ENCODE measurements at regions of chr20 and their contacts with region 1.

Region 1: GRCh38 chr20:63537525-63538203 is 488 bp upstream of the PTK6 start:
- DNase-seq: peak; percentile 83 to 97 (median 88)
- ATAC-seq: peak; percentile 86
- H3K4me3 ChIP-seq: peak overlapping the region; percentile 59
- H3K4me3 Mint-ChIP-seq: peak overlapping the region; percentile 80
- H3K27ac ChIP-seq: peak overlapping the region; percentile 59 to 73
- H3K27ac Mint-ChIP-seq: peak overlapping the region; percentile 78
- H3K4me1 ChIP-seq: peaks cover 37% of the 10 kb centered on the region
- H3K4me1 Mint-ChIP-seq: peaks cover 16% of the 10 kb centered on the region
- H3K27me3 ChIP-seq: no peaks in the 10 kb centered on the region
- H3K27me3 Mint-ChIP-seq: no peaks in the 10 kb centered on the region
- CTCF ChIP-seq: peak; percentile 97

Region 2: GRCh38 chr20:63553227-63553932 is 15.7 kb after region 1 on chr20:
- CTCF ChIA-PET with region 1: interaction called, 5 read pairs
- POLR2A ChIA-PET with region 1: interaction called, 21 read pairs
- intact Hi-C with region 1: loop called (anchors 1 kb)
- DNase-seq: peak; percentile 74 to 96 (median 90)
- ATAC-seq: peak; percentile 83
- H3K4me3 ChIP-seq: peak overlapping the region; percentile 68
- H3K4me3 Mint-ChIP-seq: peak overlapping the region; percentile 90
- H3K27ac ChIP-seq: peak overlapping the region; percentile 73 to 82
- H3K27ac Mint-ChIP-seq: peak overlapping the region; percentile 91
- H3K4me1 ChIP-seq: peaks cover 39% of the 10 kb centered on the region
- H3K4me1 Mint-ChIP-seq: peaks cover 18% of the 10 kb centered on the region
- H3K27me3 ChIP-seq: peaks cover 3 to 4% of the 10 kb centered on the region in 2 experiments
- H3K27me3 Mint-ChIP-seq: no peaks in the 10 kb centered on the region
- CTCF ChIP-seq: no peak

Region 3: DNA sequence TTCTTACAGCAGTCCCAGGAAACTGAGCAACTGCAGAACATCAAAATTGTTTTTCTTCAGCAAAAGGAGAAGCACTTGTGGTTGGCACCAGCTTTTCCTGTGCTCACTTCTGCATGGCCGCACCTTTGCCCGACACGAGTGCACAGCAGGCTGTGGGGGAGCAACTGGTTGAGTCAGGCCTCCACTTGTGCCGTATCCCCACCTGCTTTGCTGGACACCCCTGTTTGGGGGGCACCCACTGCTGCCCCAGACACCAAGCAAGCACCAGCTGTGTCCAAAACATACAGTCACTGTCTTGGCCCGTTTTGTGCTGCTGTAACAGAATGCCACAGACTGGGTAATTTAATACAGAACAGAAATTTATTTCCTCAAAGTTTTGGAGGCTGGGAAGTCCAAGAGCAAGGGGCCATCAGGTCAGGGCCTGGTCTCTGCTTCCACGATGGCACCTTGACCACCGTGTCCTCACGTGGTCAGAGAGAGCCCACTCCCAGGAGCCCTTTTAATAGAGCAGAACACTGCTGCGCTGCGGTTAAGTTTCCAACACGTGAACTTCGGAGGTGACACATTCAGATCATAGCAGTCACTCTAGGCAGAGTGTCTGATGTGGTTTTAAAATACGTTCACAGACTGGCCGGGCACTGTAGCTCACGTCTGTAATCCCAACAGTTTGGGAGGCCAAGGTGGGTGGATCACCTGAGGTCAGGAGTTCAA is 97.9 kb after region 1 on chr20:
- CTCF ChIA-PET with region 1: interaction called, 13 read pairs
- POLR2A ChIA-PET with region 1: interaction called, 8 read pairs
- intact Hi-C with region 1: loop called in 1 of 2 experiments (anchors 5 kb)
- DNase-seq: peak; percentile 66 to 93 (median 76)
- ATAC-seq: peak; percentile 57
- H3K4me3 ChIP-seq: peak overlapping the region; percentile 40
- H3K4me3 Mint-ChIP-seq: peak overlapping the region; percentile 88
- H3K27ac ChIP-seq: peak overlapping the region; percentile 77 to 85
- H3K27ac Mint-ChIP-seq: peak overlapping the region; percentile 100
- H3K4me1 ChIP-seq: peaks cover 93% of the 10 kb centered on the region
- H3K4me1 Mint-ChIP-seq: peaks cover 62% of the 10 kb centered on the region
- H3K27me3 ChIP-seq: no peaks in the 10 kb centered on the region
- H3K27me3 Mint-ChIP-seq: no peaks in the 10 kb centered on the region
- CTCF ChIP-seq: no peak

Region 4: DNA sequence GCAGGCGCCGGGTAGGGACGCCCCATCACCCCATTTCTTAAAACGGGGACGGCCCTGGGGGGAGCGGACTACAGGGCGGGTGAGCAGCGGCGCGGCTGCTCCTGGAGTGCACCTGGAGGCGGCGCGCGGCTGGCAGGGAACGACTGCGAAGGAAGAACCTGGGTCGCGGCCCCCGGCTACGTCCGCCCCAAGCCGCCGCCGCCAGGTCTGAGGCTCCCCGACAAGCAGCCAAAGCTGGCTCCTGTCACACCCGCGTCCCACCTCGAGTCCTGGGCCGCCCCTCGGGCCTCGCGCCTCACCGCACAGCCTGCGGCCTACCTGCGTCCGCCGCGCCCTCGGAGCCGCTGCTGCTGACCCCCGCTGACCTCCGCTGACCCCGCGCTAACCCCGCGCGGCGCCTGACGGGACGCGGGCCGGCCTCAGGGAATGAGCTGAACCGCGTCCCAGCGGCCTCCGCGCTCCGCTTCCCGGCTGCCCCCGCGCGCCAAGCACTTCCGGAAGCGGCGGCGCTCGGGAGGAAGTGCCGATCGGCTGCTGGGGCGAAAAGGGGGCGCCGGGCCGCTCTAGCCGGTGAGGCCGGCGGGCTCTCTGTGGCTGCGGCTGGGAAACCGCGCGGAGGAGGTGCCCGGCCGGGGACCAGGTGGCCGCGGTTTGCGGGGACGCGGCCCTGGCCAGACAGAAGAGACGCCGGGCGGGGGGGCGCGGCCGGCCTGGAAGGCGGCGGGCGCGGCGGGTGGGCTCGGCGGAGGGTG is 170.1 kb after region 1 on chr20 and contains the starts of genes ARFRP1 and ZGPAT:
- CTCF ChIA-PET with region 1: no interaction called
- POLR2A ChIA-PET with region 1: interaction called, 10 read pairs
- intact Hi-C with region 1: no loop called
- DNase-seq: peak; percentile 71 to 94 (median 88)
- ATAC-seq: peak; percentile 78
- H3K4me3 ChIP-seq: peak within 1 kb of the TSS; percentile 76
- H3K4me3 Mint-ChIP-seq: peak within 1 kb of the TSS; percentile 88
- H3K27ac ChIP-seq: peak within 1 kb of the TSS; percentile 55 to 71
- H3K27ac Mint-ChIP-seq: peak within 1 kb of the TSS; percentile 89
- H3K4me1 ChIP-seq: peaks cover 45% of the 10 kb centered on the region
- H3K4me1 Mint-ChIP-seq: peaks cover 46% of the 10 kb centered on the region
- H3K27me3 ChIP-seq: no peaks in the 10 kb centered on the region
- H3K27me3 Mint-ChIP-seq: no peaks in the 10 kb centered on the region
- CTCF ChIP-seq: no peak
- total RNA-seq, gene ARFRP1: 34.5 to 35.7 TPM
- total RNA-seq, gene ZGPAT: 28.2 to 33.4 TPM

Region 5: GRCh38 chr20:63864847-63865640 is 327.4 kb after region 1 on chr20 and contains the start of gene TPD52L2:
- CTCF ChIA-PET with region 1: interaction called, 9 read pairs
- POLR2A ChIA-PET with region 1: interaction called, 9 read pairs
- intact Hi-C with region 1: loop called (anchors 1 to 2 kb)
- DNase-seq: peak; percentile 94 to 99 (median 97)
- ATAC-seq: peak; percentile 88
- H3K4me3 ChIP-seq: peak within 1 kb of the TSS; percentile 98
- H3K4me3 Mint-ChIP-seq: peak within 1 kb of the TSS; percentile 97
- H3K27ac ChIP-seq: peak within 1 kb of the TSS; percentile 78 to 89
- H3K27ac Mint-ChIP-seq: peak within 1 kb of the TSS; percentile 85
- H3K4me1 ChIP-seq: peaks cover 37% of the 10 kb centered on the region
- H3K4me1 Mint-ChIP-seq: peaks cover 31% of the 10 kb centered on the region
- H3K27me3 ChIP-seq: no peaks in the 10 kb centered on the region
- H3K27me3 Mint-ChIP-seq: no peaks in the 10 kb centered on the region
- CTCF ChIP-seq: no peak
- total RNA-seq, gene TPD52L2: 15.1 to 15.3 TPM

Region 6: GRCh38 chr20:64062596-64063388 is 525.1 kb after region 1 on chr20 and contains the start of gene TCEA2:
- CTCF ChIA-PET with region 1: no interaction called
- POLR2A ChIA-PET with region 1: interaction called, 3 read pairs
- intact Hi-C with region 1: loop called in 1 of 2 experiments (anchors 1 kb)
- DNase-seq: peak; percentile 86 to 96 (median 94)
- ATAC-seq: peak; percentile 90
- H3K4me3 ChIP-seq: peak within 1 kb of the TSS; percentile 56
- H3K4me3 Mint-ChIP-seq: peak within 1 kb of the TSS; percentile 85
- H3K27ac ChIP-seq: peak within 1 kb of the TSS in 1 of 2 donors; percentile 22
- H3K27ac Mint-ChIP-seq: peak within 1 kb of the TSS; percentile 48
- H3K4me1 ChIP-seq: peaks cover 58% of the 10 kb centered on the region
- H3K4me1 Mint-ChIP-seq: peaks cover 41% of the 10 kb centered on the region
- H3K27me3 ChIP-seq: no peaks in the 10 kb centered on the region
- H3K27me3 Mint-ChIP-seq: no peaks in the 10 kb centered on the region
- CTCF ChIP-seq: no peak
- total RNA-seq, gene TCEA2: 28.4 to 29.9 TPM